GM12878 (cell line): ENCODE measurements at regions of chr4 and their contacts with region 1.

Region 1: DNA sequence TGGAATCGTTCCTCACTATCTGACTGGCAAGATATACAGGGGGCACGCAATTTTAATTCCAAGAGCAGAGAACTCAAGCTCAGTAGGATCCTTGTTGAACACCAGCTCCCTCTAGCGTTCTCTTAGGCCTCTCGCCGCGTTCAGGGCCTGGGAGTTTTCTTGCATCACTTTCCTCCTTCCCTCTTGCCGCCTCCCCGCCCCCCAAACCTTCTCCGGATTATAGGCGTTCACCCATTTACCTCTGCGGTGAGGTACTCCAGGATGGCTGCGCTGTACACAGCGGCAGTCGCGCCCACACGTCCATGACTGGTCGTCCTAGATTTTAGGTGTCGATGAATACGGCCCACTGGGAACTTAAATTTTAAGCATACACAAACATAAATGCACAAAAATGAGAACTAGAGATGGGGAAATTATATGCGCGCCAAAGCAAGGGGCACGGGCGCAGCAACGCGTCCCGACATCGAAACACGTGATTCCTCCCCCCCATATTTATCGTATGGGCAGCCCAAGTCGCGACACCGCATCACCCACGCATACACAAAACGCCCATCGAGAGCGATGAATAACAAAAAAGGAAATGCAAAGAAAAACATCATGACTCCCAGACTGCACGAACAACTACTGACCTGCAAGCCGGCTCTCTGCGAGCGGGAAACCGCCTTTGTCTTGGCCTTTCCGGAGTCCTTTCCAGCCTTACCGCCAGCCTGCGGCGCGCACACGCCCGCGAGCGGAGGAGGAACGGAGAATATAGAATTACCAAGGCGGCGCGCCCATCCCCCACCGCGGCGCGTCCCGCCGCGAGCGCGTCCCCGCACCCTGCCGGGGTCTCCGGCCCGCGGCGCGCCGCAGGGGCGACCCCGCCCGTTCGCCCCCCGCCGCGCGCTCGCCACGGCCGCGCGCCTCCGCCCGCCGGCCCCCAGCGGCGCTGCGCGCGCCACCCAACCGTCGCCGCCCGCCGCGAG is 759 bp downstream of the H2AZ1 start:
- DNase-seq: peak; percentile 77
- ATAC-seq: peak; percentile 39
- H3K4me3 ChIP-seq: peak overlapping the region; percentile 94
- H3K27ac ChIP-seq: peak overlapping the region; percentile 97
- H3K4me1 ChIP-seq: peaks cover 7% of the 10 kb centered on the region; the same call in 1 of the 2 replicates
- H3K27me3 ChIP-seq: no peaks in the 10 kb centered on the region
- CTCF ChIP-seq: peak; percentile 86 to 94 (median 89)
- EP300 ChIP-seq: no peak
- POLR2A ChIP-seq: peak; percentile 78
- RAD21 ChIP-seq: peak; percentile 75

Region 2: GRCh38 chr4:98928505-98929340 is 1020.6 kb before region 1 on chr4 and contains the start of gene EIF4E:
- CTCF ChIA-PET with region 1: no interaction called
- POLR2A ChIA-PET with region 1: no interaction called
- RAD21 ChIA-PET with region 1: no interaction called
- SMC1A ChIA-PET with region 1: no interaction called
- in situ Hi-C with region 1: no loop called
- intact Hi-C with region 1: loop called (anchors 5 kb)
- DNase-seq: peak; percentile 96
- ATAC-seq: peak; percentile 82
- H3K4me3 ChIP-seq: peak within 1 kb of the TSS; percentile 95
- H3K27ac ChIP-seq: peak within 1 kb of the TSS; percentile 96
- H3K4me1 ChIP-seq: peaks cover 8% of the 10 kb centered on the region
- H3K27me3 ChIP-seq: no peaks in the 10 kb centered on the region
- CTCF ChIP-seq: peak; percentile 20 to 38 (median 27); a peak in 5 of 6 replicates
- EP300 ChIP-seq: 0 out of 4 replicates have a peak, but pooled peaks of 1 of the 2 experiments have one; percentile 10
- POLR2A ChIP-seq: peak; percentile 91
- RAD21 ChIP-seq: no peak
- polyA plus RNA-seq, gene EIF4E: 167 to 372 TPM

Region 3: GRCh38 chr4:99563310-99564186 is 385.8 kb before region 1 on chr4 and contains the start of gene TRMT10A:
- CTCF ChIA-PET with region 1: interaction called, 4 read pairs
- POLR2A ChIA-PET with region 1: interaction called, 6 read pairs
- RAD21 ChIA-PET with region 1: interaction called, 8 read pairs
- SMC1A ChIA-PET with region 1: interaction called, 11 read pairs
- in situ Hi-C with region 1: loop called (anchors 5 kb)
- intact Hi-C with region 1: loop called (anchors 1 kb)
- DNase-seq: peak; percentile 85
- ATAC-seq: peak; percentile 95
- H3K4me3 ChIP-seq: peak within 1 kb of the TSS; percentile 93
- H3K27ac ChIP-seq: peak within 1 kb of the TSS; percentile 97
- H3K4me1 ChIP-seq: no peaks in the 10 kb centered on the region
- H3K27me3 ChIP-seq: no peaks in the 10 kb centered on the region
- CTCF ChIP-seq: no peak
- EP300 ChIP-seq: no peak
- POLR2A ChIP-seq: peak; percentile 81
- RAD21 ChIP-seq: no peak
- polyA plus RNA-seq, gene TRMT10A: 8.8 to 9.6 TPM

Region 4: GRCh38 chr4:99821918-99822503 is 127.3 kb before region 1 on chr4:
- CTCF ChIA-PET with region 1: interaction called, 30 read pairs
- POLR2A ChIA-PET with region 1: interaction called, 27 read pairs
- RAD21 ChIA-PET with region 1: interaction called, 38 read pairs
- SMC1A ChIA-PET with region 1: interaction called, 33 read pairs
- in situ Hi-C with region 1: loop called (anchors 5 kb)
- intact Hi-C with region 1: no loop called
- DNase-seq: peak; percentile 59
- ATAC-seq: peak; percentile 73
- H3K4me3 ChIP-seq: peak overlapping the region; percentile 59; the same call in 1 of the 2 replicates
- H3K27ac ChIP-seq: peak overlapping the region; percentile 70
- H3K4me1 ChIP-seq: peaks cover 17% of the 10 kb centered on the region; the same call in 1 of the 2 replicates
- H3K27me3 ChIP-seq: no peaks in the 10 kb centered on the region
- CTCF ChIP-seq: no peak
- EP300 ChIP-seq: no peak
- POLR2A ChIP-seq: no peak
- RAD21 ChIP-seq: no peak

Region 5: GRCh38 chr4:99885063-99885664 is 64.2 kb before region 1 on chr4:
- CTCF ChIA-PET with region 1: interaction called, 23 read pairs
- POLR2A ChIA-PET with region 1: interaction called, 5 read pairs
- RAD21 ChIA-PET with region 1: interaction called, 9 read pairs
- SMC1A ChIA-PET with region 1: interaction called, 13 read pairs
- in situ Hi-C with region 1: no loop called
- intact Hi-C with region 1: no loop called
- DNase-seq: no peak
- ATAC-seq: peak; percentile 80
- H3K4me3 ChIP-seq: no peak overlapping the region
- H3K27ac ChIP-seq: no peak overlapping the region
- H3K4me1 ChIP-seq: no peaks in the 10 kb centered on the region
- H3K27me3 ChIP-seq: no peaks in the 10 kb centered on the region
- CTCF ChIP-seq: peak; percentile 47 to 75 (median 49); a peak in 4 of 6 replicates
- EP300 ChIP-seq: no peak
- POLR2A ChIP-seq: no peak
- RAD21 ChIP-seq: peak; percentile 85

Region 6: GRCh38 chr4:99927566-99927965 is 21.8 kb before region 1 on chr4:
- CTCF ChIA-PET with region 1: interaction called, 12 read pairs
- POLR2A ChIA-PET with region 1: interaction called, 3 read pairs
- RAD21 ChIA-PET with region 1: interaction called, 4 read pairs
- SMC1A ChIA-PET with region 1: interaction called, 42 read pairs
- in situ Hi-C with region 1: no loop called
- intact Hi-C with region 1: no loop called
- DNase-seq: no peak
- ATAC-seq: no peak
- H3K4me3 ChIP-seq: no peak overlapping the region
- H3K27ac ChIP-seq: no peak overlapping the region
- H3K4me1 ChIP-seq: no peaks in the 10 kb centered on the region
- H3K27me3 ChIP-seq: no peaks in the 10 kb centered on the region
- CTCF ChIP-seq: no peak
- EP300 ChIP-seq: no peak
- POLR2A ChIP-seq: no peak
- RAD21 ChIP-seq: no peak

Region 7: GRCh38 chr4:99986792-99987191 is 37.5 kb after region 1 on chr4:
- CTCF ChIA-PET with region 1: no interaction called
- POLR2A ChIA-PET with region 1: no interaction called
- RAD21 ChIA-PET with region 1: interaction called, 7 read pairs
- SMC1A ChIA-PET with region 1: interaction called, 4 read pairs
- in situ Hi-C with region 1: no loop called
- intact Hi-C with region 1: loop called (anchors 2 kb)
- DNase-seq: peak; percentile 3
- ATAC-seq: peak; percentile 87
- H3K4me3 ChIP-seq: no peak overlapping the region
- H3K27ac ChIP-seq: no peak overlapping the region
- H3K4me1 ChIP-seq: peaks cover 7% of the 10 kb centered on the region; the same call in 1 of the 2 replicates
- H3K27me3 ChIP-seq: no peaks in the 10 kb centered on the region
- CTCF ChIP-seq: no peak
- EP300 ChIP-seq: no peak
- POLR2A ChIP-seq: no peak
- RAD21 ChIP-seq: no peak